Heart right ventricle (tissue), 16 donors: ENCODE measurements at regions of chr13 and their contacts with region 1.

Region 1: DNA sequence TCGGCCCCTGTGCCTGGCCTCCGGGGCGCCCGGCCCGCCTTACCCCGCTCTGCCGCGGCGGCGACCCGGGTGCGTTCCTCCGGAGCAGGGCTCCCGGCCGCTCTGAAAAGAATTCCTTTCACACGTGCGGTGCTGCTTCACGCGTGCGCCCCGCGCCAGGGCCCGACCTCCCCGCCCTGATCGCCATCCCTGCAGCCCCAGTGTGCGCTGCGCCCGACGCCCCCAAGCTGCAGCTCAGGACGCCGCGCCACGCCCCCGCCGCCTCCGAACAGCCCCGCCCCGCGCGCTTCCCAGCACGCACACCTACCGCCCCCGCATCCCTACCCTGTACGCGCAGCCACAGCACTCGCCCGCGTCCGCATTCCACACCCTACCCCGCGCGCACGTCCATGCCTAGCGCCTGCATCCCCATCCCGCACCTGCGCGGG is at the start of gene GJA3:
- DNase-seq: peak; percentile 61 to 66
- ATAC-seq: peak; percentile 79 to 93 (median 86)
- H3K4me3 ChIP-seq: peak within 1 kb of the TSS; percentile 33 to 66 (median 62)
- H3K27ac ChIP-seq: peak within 1 kb of the TSS; percentile 19 to 89 (median 79)
- H3K4me1 ChIP-seq: peaks cover 0 to 23% (median 12%) of the 10 kb centered on the region in 9 donors
- H3K27me3 ChIP-seq: peaks cover 0 to 93% (median 76%) of the 10 kb centered on the region in 7 donors
- CTCF ChIP-seq: peak in 3 of 9 donors; percentile 31 to 36 (median 35)
- total RNA-seq, gene GJA3: 14.2 to 30.1 (median 19.4) TPM

Region 2: GRCh38 chr13:20035130-20035529 is 125.7 kb before region 1 on chr13:
- intact Hi-C with region 1: loop called in 2 of 10 experiments (anchors 1 to 10 kb)
- DNase-seq: no peak
- ATAC-seq: no peak
- H3K4me3 ChIP-seq: no peak overlapping the region
- H3K27ac ChIP-seq: no peak overlapping the region
- H3K4me1 ChIP-seq: peaks cover 0 to 9% (median 0%) of the 10 kb centered on the region in 9 donors
- H3K27me3 ChIP-seq: no peaks in the 10 kb centered on the region
- CTCF ChIP-seq: peak in 7 of 9 donors; percentile 12 to 50 (median 35)

Region 3: GRCh38 chr13:20057963-20058362 is 102.9 kb before region 1 on chr13:
- intact Hi-C with region 1: loop called in 5 of 10 experiments (anchors 1 to 10 kb)
- DNase-seq: no peak
- ATAC-seq: no peak
- H3K4me3 ChIP-seq: no peak overlapping the region
- H3K27ac ChIP-seq: no peak overlapping the region
- H3K4me1 ChIP-seq: peaks cover 0 to 9% (median 0%) of the 10 kb centered on the region in 9 donors
- H3K27me3 ChIP-seq: no peaks in the 10 kb centered on the region
- CTCF ChIP-seq: peak in 2 of 9 donors; percentile 12 to 30

Region 4: GRCh38 chr13:20127577-20128466 is 33.0 kb before region 1 on chr13:
- intact Hi-C with region 1: loop called in 7 of 10 experiments (anchors 1 to 5 kb)
- DNase-seq: peak; percentile 69 to 78
- ATAC-seq: peak; percentile 82 to 88 (median 84)
- H3K4me3 ChIP-seq: peak overlapping the region; percentile 30 to 73 (median 64)
- H3K27ac ChIP-seq: peak overlapping the region; percentile 78 to 97 (median 94)
- H3K4me1 ChIP-seq: peaks cover 5 to 57% (median 35%) of the 10 kb centered on the region in 9 donors
- H3K27me3 ChIP-seq: peaks cover 0 to 42% (median 15%) of the 10 kb centered on the region in 7 donors
- CTCF ChIP-seq: peak; percentile 17 to 74 (median 43)